HepG2 (cell line): ENCODE measurements at regions of chr11 and their contacts with region 1.

Region 1: GRCh38 chr11:62831520-62832335 is at the start of gene STX5:
- DNase-seq: peak; percentile 97
- ATAC-seq: peak; percentile 90
- H3K4me3 ChIP-seq: peak within 1 kb of the TSS; percentile 78 to 100 (median 99)
- H3K27ac ChIP-seq: peak within 1 kb of the TSS; percentile 95
- H3K4me1 ChIP-seq: peaks cover 32% of the 10 kb centered on the region
- H3K27me3 ChIP-seq: no peaks in the 10 kb centered on the region; a peak in 1 of 5 replicates
- CTCF ChIP-seq: no peak
- EP300 ChIP-seq: no peak
- POLR2A ChIP-seq: peak; percentile 79 to 88
- RAD21 ChIP-seq: no peak
- total RNA-seq, gene STX5: 26.9 and 29.2 TPM in 2 replicates

Region 2: GRCh38 chr11:62805076-62805892 is 26.4 kb before region 1 on chr11 and contains the start of gene NXF1:
- CTCF ChIA-PET with region 1: no interaction called
- POLR2A ChIA-PET with region 1: interaction called, 41 read pairs
- in situ Hi-C with region 1: no loop called
- intact Hi-C with region 1: loop called (anchors 1 kb)
- DNase-seq: peak; percentile 85
- ATAC-seq: peak; percentile 85
- H3K4me3 ChIP-seq: peak within 1 kb of the TSS; percentile 86 to 97 (median 92)
- H3K27ac ChIP-seq: peak within 1 kb of the TSS; percentile 58
- H3K4me1 ChIP-seq: peaks cover 23% of the 10 kb centered on the region
- H3K27me3 ChIP-seq: no peaks in the 10 kb centered on the region; a peak in 1 of 5 replicates
- CTCF ChIP-seq: no peak; the same call in 1 of the 2 replicates
- EP300 ChIP-seq: no peak
- POLR2A ChIP-seq: peak; percentile 100
- RAD21 ChIP-seq: peak; percentile 66; the same call in 1 of the 2 replicates
- total RNA-seq, gene NXF1: 26.2 and 30.9 TPM in 2 replicates

Region 3: DNA sequence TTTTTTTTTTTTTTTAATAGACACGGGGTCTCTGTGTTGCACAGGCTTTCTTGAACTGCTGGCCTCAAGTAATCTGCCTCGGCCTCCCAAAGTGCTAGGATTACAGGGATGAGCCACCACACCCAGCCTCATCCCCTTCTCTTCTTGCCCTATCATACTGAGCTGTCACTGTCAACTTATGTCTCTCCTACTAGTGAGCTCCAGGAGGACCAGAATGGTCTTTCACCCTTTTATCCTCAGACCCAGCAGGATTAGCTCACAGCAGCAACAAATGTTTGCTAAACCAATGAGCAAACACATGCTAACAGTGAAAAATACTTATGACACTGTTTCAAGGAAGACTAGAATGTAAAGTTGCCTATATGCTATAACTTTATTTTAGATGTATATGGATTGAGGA is 20.1 kb before region 1 on chr11:
- CTCF ChIA-PET with region 1: no interaction called
- POLR2A ChIA-PET with region 1: interaction called, 41 read pairs
- in situ Hi-C with region 1: no loop called
- intact Hi-C with region 1: no loop called
- DNase-seq: peak; percentile 50
- ATAC-seq: peak; percentile 89
- H3K4me3 ChIP-seq: no peak overlapping the region
- H3K27ac ChIP-seq: no peak overlapping the region
- H3K4me1 ChIP-seq: peaks cover 18% of the 10 kb centered on the region
- H3K27me3 ChIP-seq: no peaks in the 10 kb centered on the region
- CTCF ChIP-seq: no peak
- EP300 ChIP-seq: no peak
- POLR2A ChIP-seq: no peak
- RAD21 ChIP-seq: no peak

Region 4: GRCh38 chr11:62880803-62881578 is 49.3 kb after region 1 on chr11 and contains the start of gene SLC3A2:
- CTCF ChIA-PET with region 1: no interaction called
- POLR2A ChIA-PET with region 1: interaction called, 15 read pairs
- in situ Hi-C with region 1: no loop called
- intact Hi-C with region 1: no loop called
- DNase-seq: peak; percentile 74
- ATAC-seq: peak; percentile 91
- H3K4me3 ChIP-seq: peak within 1 kb of the TSS; percentile 92 to 99 (median 94)
- H3K27ac ChIP-seq: peak within 1 kb of the TSS; percentile 93
- H3K4me1 ChIP-seq: peaks cover 56% of the 10 kb centered on the region
- H3K27me3 ChIP-seq: no peaks in the 10 kb centered on the region; a peak in 1 of 5 replicates
- CTCF ChIP-seq: peak; percentile 94
- EP300 ChIP-seq: no peak
- POLR2A ChIP-seq: peak; percentile 96 to 98
- RAD21 ChIP-seq: peak; percentile 84
- total RNA-seq, gene SLC3A2: 94.8 and 213 TPM in 2 replicates

Region 5: GRCh38 chr11:62965574-62965973 is 133.8 kb after region 1 on chr11:
- CTCF ChIA-PET with region 1: no interaction called
- POLR2A ChIA-PET with region 1: no interaction called
- in situ Hi-C with region 1: no loop called
- intact Hi-C with region 1: no loop called
- DNase-seq: no peak
- ATAC-seq: no peak
- H3K4me3 ChIP-seq: no peak overlapping the region
- H3K27ac ChIP-seq: no peak overlapping the region
- H3K4me1 ChIP-seq: no peaks in the 10 kb centered on the region
- H3K27me3 ChIP-seq: peaks cover 0 to 8% of the 10 kb centered on the region in 2 experiments; a peak in 3 of 5 replicates
- CTCF ChIP-seq: no peak
- EP300 ChIP-seq: no peak
- POLR2A ChIP-seq: no peak
- RAD21 ChIP-seq: no peak